ENCODE measurements at regions of chr16 and their contacts with region 1.

Region 1: GRCh38 chr16:48455549-48455948 is 70.3 kb upstream of the SIAH1 start:
- DNase-seq: no peak
- ATAC-seq: no peak
- H3K4me3 ChIP-seq: no peak overlapping the region
- H3K27ac ChIP-seq: no peak overlapping the region
- H3K4me1 ChIP-seq: peaks cover 0 to 19% (median 0%) of the 10 kb centered on the region in 12 donors
- H3K27me3 ChIP-seq: no peaks in the 10 kb centered on the region
- CTCF ChIP-seq: no peak
- POLR2A ChIP-seq: no peak

Region 2: GRCh38 chr16:48409839-48410611 is 45.5 kb before region 1 on chr16:
- intact Hi-C with region 1: no loop called
- DNase-seq: peak in 1 of 5 donors; percentile 23
- ATAC-seq: peak in 3 of 4 donors; percentile 41 to 89 (median 85)
- H3K4me3 ChIP-seq: no peak overlapping the region
- H3K27ac ChIP-seq: no peak overlapping the region
- H3K4me1 ChIP-seq: peaks cover 0 to 20% (median 0%) of the 10 kb centered on the region in 12 donors
- H3K27me3 ChIP-seq: no peaks in the 10 kb centered on the region
- CTCF ChIP-seq: no peak
- POLR2A ChIP-seq: no peak

Region 3: GRCh38 chr16:48479955-48480354 is 24.4 kb after region 1 on chr16:
- intact Hi-C with region 1: loop called in 1 of 10 experiments (anchors 2 kb)
- DNase-seq: no peak
- ATAC-seq: no peak
- H3K4me3 ChIP-seq: no peak overlapping the region
- H3K27ac ChIP-seq: no peak overlapping the region
- H3K4me1 ChIP-seq: no peaks in the 10 kb centered on the region
- H3K27me3 ChIP-seq: no peaks in the 10 kb centered on the region
- CTCF ChIP-seq: no peak
- POLR2A ChIP-seq: no peak

Measured in heart left ventricle (tissue), 16 donors.